ENCODE measurements at regions of chr12 and their contacts with region 1.

Region 1: GRCh38 chr12:113980537-113981337 is 14.6 kb upstream of the RBM19 start:
- H3K4me3 ChIP-seq: no peak overlapping the region
- H3K27ac ChIP-seq: no peak overlapping the region
- H3K4me1 ChIP-seq: no peaks in the 10 kb centered on the region
- CTCF ChIP-seq: peak; percentile 67; the same call in 1 of the 2 replicates

Region 2: GRCh38 chr12:113965951-113966797 is 14.6 kb before region 1 on chr12 and contains the start of gene RBM19:
- CTCF ChIA-PET with region 1: interaction called, 11 read pairs
- POLR2A ChIA-PET with region 1: no interaction called
- H3K4me3 ChIP-seq: peak within 1 kb of the TSS; percentile 83
- H3K27ac ChIP-seq: no peak within 1 kb of the TSS
- H3K4me1 ChIP-seq: no peaks in the 10 kb centered on the region
- CTCF ChIP-seq: peak; percentile 94

Region 3: GRCh38 chr12:114166362-114166761 is 185.6 kb after region 1 on chr12:
- CTCF ChIA-PET with region 1: interaction called, 11 read pairs
- POLR2A ChIA-PET with region 1: no interaction called
- H3K4me3 ChIP-seq: no peak overlapping the region
- H3K27ac ChIP-seq: no peak overlapping the region
- H3K4me1 ChIP-seq: no peaks in the 10 kb centered on the region
- CTCF ChIP-seq: peak; percentile 42; the same call in 1 of the 2 replicates

Region 4: GRCh38 chr12:114476159-114476558 is 495.4 kb after region 1 on chr12:
- CTCF ChIA-PET with region 1: interaction called, 11 read pairs
- POLR2A ChIA-PET with region 1: no interaction called
- H3K4me3 ChIP-seq: no peak overlapping the region
- H3K27ac ChIP-seq: no peak overlapping the region
- H3K4me1 ChIP-seq: no peaks in the 10 kb centered on the region
- CTCF ChIP-seq: 0 out of 2 replicates have a peak, but pooled peaks have one; percentile 45

Region 5: GRCh38 chr12:114508529-114509129 is 527.9 kb after region 1 on chr12:
- CTCF ChIA-PET with region 1: interaction called, 59 read pairs
- POLR2A ChIA-PET with region 1: no interaction called
- H3K4me3 ChIP-seq: no peak overlapping the region
- H3K27ac ChIP-seq: no peak overlapping the region
- H3K4me1 ChIP-seq: no peaks in the 10 kb centered on the region
- CTCF ChIP-seq: peak; percentile 39; the same call in 1 of the 2 replicates

Region 6: DNA sequence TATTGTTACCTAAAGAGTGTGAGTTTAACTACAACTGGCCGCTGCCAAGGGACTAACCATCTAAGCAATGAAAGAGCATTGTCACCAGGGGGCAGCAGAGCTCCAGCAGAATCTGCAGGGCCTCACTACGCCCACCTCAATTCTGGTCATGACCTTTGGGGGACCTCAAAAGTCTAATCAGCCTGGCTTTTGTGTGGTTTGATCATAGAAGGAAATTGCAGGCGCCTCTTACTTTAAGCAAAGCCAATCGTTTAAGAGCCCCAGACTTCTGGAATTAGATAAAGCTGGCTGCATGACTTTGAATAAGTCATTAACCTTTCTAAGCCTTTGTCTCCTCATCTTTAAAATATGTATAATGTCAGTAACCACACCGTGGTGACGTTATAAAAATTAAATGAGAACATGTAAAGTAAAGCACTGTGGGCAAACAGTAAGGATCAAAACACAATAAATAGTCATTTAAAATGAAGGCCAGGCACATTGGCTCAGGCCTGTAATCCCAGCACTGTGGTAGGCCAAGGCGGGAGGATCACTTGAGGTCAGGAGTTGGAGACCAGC is 644.6 kb after region 1 on chr12:
- CTCF ChIA-PET with region 1: interaction called, 10 read pairs
- POLR2A ChIA-PET with region 1: no interaction called
- H3K4me3 ChIP-seq: no peak overlapping the region
- H3K27ac ChIP-seq: no peak overlapping the region
- H3K4me1 ChIP-seq: no peaks in the 10 kb centered on the region; the same call in 1 of the 2 replicates
- CTCF ChIP-seq: peak; percentile 75

Region 7: GRCh38 chr12:115337693-115338543 is 1357.2 kb after region 1 on chr12:
- CTCF ChIA-PET with region 1: no interaction called
- POLR2A ChIA-PET with region 1: interaction called, 13 read pairs
- H3K4me3 ChIP-seq: no peak overlapping the region
- H3K27ac ChIP-seq: no peak overlapping the region
- H3K4me1 ChIP-seq: no peaks in the 10 kb centered on the region
- CTCF ChIP-seq: no peak